ENCODE measurements at regions of chr17 and their contacts with region 1.

Region 1: GRCh38 chr17:48678141-48678971 is 44.0 kb downstream of the PRAC1 start:
- DNase-seq: peak; percentile 76
- ATAC-seq: peak; percentile 96
- H3K4me3 Mint-ChIP-seq: no peak overlapping the region
- H3K27ac Mint-ChIP-seq: no peak overlapping the region
- H3K4me1 Mint-ChIP-seq: peaks cover 2% of the 10 kb centered on the region
- H3K27me3 Mint-ChIP-seq: peaks cover 54% of the 10 kb centered on the region

Region 2: GRCh38 chr17:48636177-48637018 is 42.0 kb before region 1 on chr17:
- CTCF ChIA-PET with region 1: interaction called, 13 read pairs
- POLR2A ChIA-PET with region 1: no interaction called
- DNase-seq: peak; percentile 80
- ATAC-seq: peak; percentile 90
- H3K4me3 Mint-ChIP-seq: peak overlapping the region; percentile 18
- H3K27ac Mint-ChIP-seq: no peak overlapping the region
- H3K4me1 Mint-ChIP-seq: peaks cover 14% of the 10 kb centered on the region
- H3K27me3 Mint-ChIP-seq: peaks cover 84% of the 10 kb centered on the region

Region 3: GRCh38 chr17:48718227-48718760 is 39.9 kb after region 1 on chr17:
- CTCF ChIA-PET with region 1: interaction called, 33 read pairs
- POLR2A ChIA-PET with region 1: no interaction called
- DNase-seq: no peak
- ATAC-seq: no peak
- H3K4me3 Mint-ChIP-seq: peak overlapping the region; percentile 1
- H3K27ac Mint-ChIP-seq: peak overlapping the region; percentile 20
- H3K4me1 Mint-ChIP-seq: peaks cover 20% of the 10 kb centered on the region
- H3K27me3 Mint-ChIP-seq: peaks cover 63% of the 10 kb centered on the region

Region 4: DNA sequence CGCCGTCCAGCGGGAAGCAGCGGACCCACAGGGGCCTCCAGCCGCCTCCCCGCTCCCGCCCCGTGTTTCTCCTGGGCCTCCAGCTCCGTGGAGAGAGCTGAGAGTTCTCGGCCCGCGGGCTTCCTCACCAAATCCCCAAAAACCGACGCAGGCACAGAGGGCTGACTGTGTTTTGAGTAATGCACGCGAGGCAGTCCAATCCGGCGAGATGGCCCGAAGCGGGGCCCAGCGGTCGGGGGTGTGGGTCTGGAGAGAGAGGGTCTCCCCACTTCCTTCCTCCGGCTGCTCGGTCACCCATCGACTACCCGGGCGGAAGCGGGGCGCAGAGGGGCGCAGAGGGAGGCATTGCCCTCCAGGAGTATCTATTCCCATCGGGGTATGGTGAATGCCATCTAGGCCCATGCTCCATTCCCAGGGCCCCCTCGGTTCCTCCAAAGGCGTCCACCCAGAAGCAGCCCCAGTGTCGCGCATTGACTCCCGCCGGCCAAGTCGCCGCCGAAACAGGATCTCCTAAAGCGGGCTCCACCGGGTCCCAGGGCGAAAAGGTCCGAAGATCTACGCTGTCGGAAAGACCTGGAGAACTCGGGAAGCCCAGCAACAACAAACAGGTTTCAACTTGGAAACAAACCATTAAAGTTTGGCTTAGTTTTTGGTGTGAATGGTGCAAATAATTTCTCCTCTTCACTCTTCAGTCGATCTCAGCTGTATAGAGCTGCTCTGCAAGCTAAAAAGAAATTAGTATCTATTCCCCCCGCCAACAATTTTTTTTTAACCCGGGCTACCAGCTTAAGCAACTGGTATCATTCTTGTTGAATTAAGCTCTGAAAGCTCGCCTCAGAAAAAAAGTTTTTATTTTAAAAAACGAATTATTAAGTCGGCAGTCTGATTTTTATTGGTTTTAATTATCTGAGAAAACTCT is 69.3 kb after region 1 on chr17:
- CTCF ChIA-PET with region 1: interaction called, 10 read pairs
- POLR2A ChIA-PET with region 1: no interaction called
- DNase-seq: no peak
- ATAC-seq: no peak
- H3K4me3 Mint-ChIP-seq: no peak overlapping the region
- H3K27ac Mint-ChIP-seq: no peak overlapping the region
- H3K4me1 Mint-ChIP-seq: peaks cover 4% of the 10 kb centered on the region
- H3K27me3 Mint-ChIP-seq: peaks cover 93% of the 10 kb centered on the region

Region 5: DNA sequence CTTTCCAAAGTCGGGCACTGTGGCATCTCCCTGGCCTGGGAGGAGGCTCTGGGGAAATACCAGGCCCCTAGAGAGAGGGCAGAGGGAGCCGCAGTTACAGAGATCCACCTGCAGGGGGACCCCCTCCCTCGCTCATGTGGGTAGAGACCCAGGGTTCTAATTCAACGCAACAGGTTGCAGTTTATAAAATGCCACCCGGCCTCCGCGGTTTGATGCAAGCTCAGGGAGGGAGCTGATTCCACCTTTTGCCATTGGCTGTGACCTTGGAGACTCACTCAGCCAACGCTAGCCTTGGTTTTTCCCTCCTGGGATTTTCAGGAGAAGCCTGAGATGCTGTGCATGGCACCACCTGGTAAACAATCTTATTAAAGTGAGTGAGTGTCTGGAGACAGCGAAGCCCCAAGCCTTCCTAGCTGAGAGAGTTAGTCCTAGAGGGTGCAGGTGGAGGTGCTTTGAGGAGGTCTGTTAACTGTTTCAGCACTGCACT is 126.6 kb after region 1 on chr17:
- CTCF ChIA-PET with region 1: interaction called, 15 read pairs
- POLR2A ChIA-PET with region 1: no interaction called
- DNase-seq: peak; percentile 78
- ATAC-seq: peak; percentile 94
- H3K4me3 Mint-ChIP-seq: no peak overlapping the region
- H3K27ac Mint-ChIP-seq: no peak overlapping the region
- H3K4me1 Mint-ChIP-seq: no peaks in the 10 kb centered on the region
- H3K27me3 Mint-ChIP-seq: peaks cover 18% of the 10 kb centered on the region

Region 6: GRCh38 chr17:49031965-49032928 is 353.9 kb after region 1 on chr17:
- CTCF ChIA-PET with region 1: interaction called, 24 read pairs
- POLR2A ChIA-PET with region 1: no interaction called
- DNase-seq: peak; percentile 64
- ATAC-seq: peak; percentile 82
- H3K4me3 Mint-ChIP-seq: no peak overlapping the region
- H3K27ac Mint-ChIP-seq: no peak overlapping the region
- H3K4me1 Mint-ChIP-seq: no peaks in the 10 kb centered on the region
- H3K27me3 Mint-ChIP-seq: peaks cover 3% of the 10 kb centered on the region